ENCODE measurements at regions of chr12 and their contacts with region 1.

Region 1: DNA sequence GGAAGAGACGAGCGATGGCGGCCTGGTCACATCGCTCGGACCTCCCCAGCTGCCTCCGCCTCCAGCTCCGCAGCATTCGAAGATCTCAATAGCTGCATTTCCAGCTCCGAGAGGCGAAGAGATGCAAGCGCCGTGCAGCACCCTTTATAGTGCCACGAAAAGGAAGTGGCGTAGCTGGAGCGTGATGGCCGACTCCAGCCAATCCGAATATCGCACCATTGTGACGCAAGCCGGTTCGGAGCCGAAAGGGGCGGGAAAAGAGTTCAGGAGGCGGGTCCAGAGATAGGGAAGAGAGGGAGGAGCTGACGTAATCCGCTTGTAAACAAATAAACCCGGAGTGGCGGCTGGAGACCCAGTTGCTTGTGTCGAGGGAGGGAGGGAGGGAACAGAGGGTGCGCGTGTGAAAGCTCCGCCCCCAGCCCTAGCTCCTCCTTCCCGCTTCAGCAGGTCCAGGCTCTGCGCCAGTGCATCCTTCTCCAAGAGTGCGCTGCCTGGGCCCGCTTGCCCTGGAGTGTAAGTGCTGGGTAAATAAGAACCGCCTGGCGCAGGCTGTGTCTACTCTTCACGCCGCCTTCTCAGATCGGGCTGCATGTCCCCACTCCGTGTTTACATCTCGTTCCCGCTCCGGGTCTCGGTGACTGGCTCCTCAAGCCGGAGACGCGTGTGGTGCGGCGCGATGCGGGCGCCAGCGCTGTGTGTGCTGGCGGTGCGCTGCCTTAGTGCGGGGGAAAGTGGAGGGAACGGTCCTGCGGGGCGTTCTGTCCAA is at the start of gene BTG1:
- DNase-seq: peak; percentile 96 to 100 (median 98)
- ATAC-seq: peak; percentile 72
- H3K4me3 ChIP-seq: peak within 1 kb of the TSS; percentile 91 to 95
- H3K4me3 Mint-ChIP-seq: peak within 1 kb of the TSS; percentile 96
- H3K27ac ChIP-seq: peak within 1 kb of the TSS; percentile 90 to 92
- H3K27ac Mint-ChIP-seq: peak within 1 kb of the TSS; percentile 99
- H3K4me1 ChIP-seq: peaks cover 23% of the 10 kb centered on the region
- H3K4me1 Mint-ChIP-seq: peaks cover 27% of the 10 kb centered on the region
- H3K27me3 ChIP-seq: no peaks in the 10 kb centered on the region
- H3K27me3 Mint-ChIP-seq: no peaks in the 10 kb centered on the region
- CTCF ChIP-seq: no peak
- total RNA-seq, gene BTG1: 1,847 to 1,850 TPM

Region 2: DNA sequence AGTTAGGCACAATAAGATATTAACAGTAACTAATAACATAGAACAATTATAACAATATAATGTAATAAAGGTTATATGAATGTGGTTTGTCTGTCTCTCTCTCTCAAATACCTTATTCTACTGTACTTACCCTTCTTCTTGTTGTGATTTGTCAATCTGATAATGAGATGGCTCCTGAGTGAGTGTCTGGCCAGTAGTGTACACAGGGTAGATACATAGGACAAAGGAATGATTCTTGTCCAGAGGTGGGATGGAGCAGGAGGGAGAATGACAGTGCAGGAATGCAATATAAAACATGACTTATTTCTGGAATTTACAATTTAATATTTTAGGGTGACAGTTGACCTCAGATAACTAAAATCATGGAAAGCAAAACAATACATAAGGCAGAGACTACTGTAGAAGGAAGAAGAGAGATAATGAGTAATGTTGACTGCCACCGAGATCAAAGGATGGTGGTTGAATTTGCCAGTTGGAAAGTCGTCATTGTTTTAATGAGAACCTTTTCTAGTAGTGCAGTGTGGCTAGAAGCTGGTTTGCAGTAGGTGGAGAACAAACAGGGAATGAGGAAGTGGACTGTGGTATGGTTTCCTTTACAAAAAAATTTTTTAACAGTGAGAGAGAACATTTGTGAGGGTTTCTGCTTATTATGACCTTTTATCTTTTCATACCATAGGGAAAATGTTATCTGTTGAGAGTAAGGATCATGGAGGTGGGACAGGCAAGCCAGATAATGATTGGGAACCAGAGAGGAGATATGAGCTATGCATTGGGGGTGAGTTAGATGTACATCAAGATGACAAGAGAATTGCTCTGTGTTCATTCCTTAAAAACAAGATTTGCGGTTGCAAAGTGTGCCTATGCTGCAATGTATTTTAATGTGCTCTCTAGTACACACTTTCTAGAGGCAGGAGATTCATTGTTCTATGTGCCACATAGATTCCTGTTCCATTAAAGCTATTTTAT is 458.6 kb before region 1 on chr12:
- CTCF ChIA-PET with region 1: no interaction called
- POLR2A ChIA-PET with region 1: no interaction called
- intact Hi-C with region 1: loop called in 1 of 2 experiments (anchors 10 kb)
- DNase-seq: peak in 4 of 9 experiments; percentile 27 to 80 (median 64)
- ATAC-seq: peak; percentile 89
- H3K4me3 ChIP-seq: no peak overlapping the region
- H3K4me3 Mint-ChIP-seq: peak overlapping the region; percentile 13
- H3K27ac ChIP-seq: no peak overlapping the region
- H3K27ac Mint-ChIP-seq: peak overlapping the region; percentile 60
- H3K4me1 ChIP-seq: peaks cover 23% of the 10 kb centered on the region
- H3K4me1 Mint-ChIP-seq: peaks cover 20% of the 10 kb centered on the region
- H3K27me3 ChIP-seq: no peaks in the 10 kb centered on the region
- H3K27me3 Mint-ChIP-seq: no peaks in the 10 kb centered on the region
- CTCF ChIP-seq: no peak

Region 3: DNA sequence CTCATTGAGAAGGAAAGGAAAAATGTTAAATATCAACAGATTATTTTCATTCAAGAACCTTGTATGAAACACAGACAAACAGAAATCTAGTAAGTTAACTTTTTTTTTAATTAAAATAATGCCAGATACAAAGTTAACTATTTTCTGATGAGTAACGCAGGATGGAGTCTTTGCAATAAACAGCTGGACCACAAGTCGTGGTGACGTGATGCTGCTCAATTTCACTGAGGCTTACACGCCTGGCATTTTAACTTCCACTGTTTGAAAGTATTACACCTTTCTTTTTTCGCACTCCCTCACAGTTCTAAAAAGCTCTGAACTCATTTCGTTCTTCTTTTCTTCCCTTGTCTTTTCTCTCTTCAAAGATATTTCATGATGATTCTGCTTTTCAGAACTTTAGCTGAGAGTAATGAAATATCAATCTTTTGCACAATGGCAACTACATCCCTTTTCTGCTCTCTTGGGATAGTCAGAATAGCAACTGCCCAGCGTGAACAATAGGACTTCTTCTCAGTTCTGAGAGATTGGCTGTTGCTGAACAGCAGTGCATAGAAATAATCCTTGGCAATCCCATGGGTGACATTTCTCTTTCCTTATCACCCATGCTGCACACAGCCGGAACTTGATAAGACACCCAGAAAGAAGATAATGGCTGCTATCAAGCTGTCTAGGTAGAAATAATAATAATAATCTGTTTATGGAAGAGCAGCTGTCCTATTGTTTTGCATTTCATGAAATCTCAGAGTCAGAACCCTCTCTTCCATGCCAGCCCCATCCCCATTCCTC is 160.7 kb before region 1 on chr12:
- CTCF ChIA-PET with region 1: interaction called, 3 read pairs
- POLR2A ChIA-PET with region 1: interaction called, 41 read pairs
- intact Hi-C with region 1: no loop called
- DNase-seq: peak in 4 of 9 experiments; percentile 20 to 48 (median 27)
- ATAC-seq: peak; percentile 62
- H3K4me3 ChIP-seq: no peak overlapping the region
- H3K4me3 Mint-ChIP-seq: peak overlapping the region; percentile 32
- H3K27ac ChIP-seq: no peak overlapping the region
- H3K27ac Mint-ChIP-seq: peak overlapping the region; percentile 78
- H3K4me1 ChIP-seq: peaks cover 20% of the 10 kb centered on the region
- H3K4me1 Mint-ChIP-seq: peaks cover 59% of the 10 kb centered on the region
- H3K27me3 ChIP-seq: no peaks in the 10 kb centered on the region
- H3K27me3 Mint-ChIP-seq: no peaks in the 10 kb centered on the region
- CTCF ChIP-seq: no peak

Region 4: GRCh38 chr12:92108651-92109050 is 37.3 kb before region 1 on chr12:
- CTCF ChIA-PET with region 1: no interaction called
- POLR2A ChIA-PET with region 1: interaction called, 14 read pairs
- intact Hi-C with region 1: no loop called
- DNase-seq: no peak
- ATAC-seq: no peak
- H3K4me3 ChIP-seq: no peak overlapping the region
- H3K4me3 Mint-ChIP-seq: peak overlapping the region; percentile 44
- H3K27ac ChIP-seq: no peak overlapping the region
- H3K27ac Mint-ChIP-seq: peak overlapping the region; percentile 89
- H3K4me1 ChIP-seq: peaks cover 85% of the 10 kb centered on the region
- H3K4me1 Mint-ChIP-seq: peaks cover 82% of the 10 kb centered on the region
- H3K27me3 ChIP-seq: no peaks in the 10 kb centered on the region
- H3K27me3 Mint-ChIP-seq: no peaks in the 10 kb centered on the region
- CTCF ChIP-seq: no peak

Region 5: GRCh38 chr12:92297932-92298696 is 152.2 kb after region 1 on chr12:
- CTCF ChIA-PET with region 1: interaction called, 3 read pairs
- POLR2A ChIA-PET with region 1: interaction called, 3 read pairs
- intact Hi-C with region 1: loop called in 1 of 2 experiments (anchors 2 kb)
- DNase-seq: peak in 4 of 9 experiments; percentile 5 to 55 (median 30)
- ATAC-seq: peak; percentile 88
- H3K4me3 ChIP-seq: no peak overlapping the region
- H3K4me3 Mint-ChIP-seq: peak overlapping the region; percentile 29
- H3K27ac ChIP-seq: peak overlapping the region; percentile 8 to 13
- H3K27ac Mint-ChIP-seq: peak overlapping the region; percentile 84
- H3K4me1 ChIP-seq: peaks cover 31% of the 10 kb centered on the region
- H3K4me1 Mint-ChIP-seq: peaks cover 15% of the 10 kb centered on the region
- H3K27me3 ChIP-seq: no peaks in the 10 kb centered on the region
- H3K27me3 Mint-ChIP-seq: no peaks in the 10 kb centered on the region
- CTCF ChIP-seq: no peak

Region 6: GRCh38 chr12:92505254-92506231 is 359.6 kb after region 1 on chr12:
- CTCF ChIA-PET with region 1: no interaction called
- POLR2A ChIA-PET with region 1: interaction called, 18 read pairs
- intact Hi-C with region 1: no loop called
- DNase-seq: peak in 8 of 9 experiments; percentile 11 to 67 (median 40)
- ATAC-seq: peak; percentile 80
- H3K4me3 ChIP-seq: peak overlapping the region; percentile 27 to 28
- H3K4me3 Mint-ChIP-seq: peak overlapping the region; percentile 80
- H3K27ac ChIP-seq: peak overlapping the region; percentile 48 to 75
- H3K27ac Mint-ChIP-seq: peak overlapping the region; percentile 96
- H3K4me1 ChIP-seq: peaks cover 9% of the 10 kb centered on the region
- H3K4me1 Mint-ChIP-seq: peaks cover 22% of the 10 kb centered on the region
- H3K27me3 ChIP-seq: no peaks in the 10 kb centered on the region
- H3K27me3 Mint-ChIP-seq: no peaks in the 10 kb centered on the region
- CTCF ChIP-seq: no peak

Region 7: GRCh38 chr12:92649511-92650227 is 503.8 kb after region 1 on chr12:
- CTCF ChIA-PET with region 1: interaction called, 6 read pairs
- POLR2A ChIA-PET with region 1: no interaction called
- intact Hi-C with region 1: loop called (anchors 1 to 5 kb)
- DNase-seq: peak; percentile 29 to 85 (median 63)
- ATAC-seq: peak; percentile 90
- H3K4me3 ChIP-seq: no peak overlapping the region
- H3K4me3 Mint-ChIP-seq: no peak overlapping the region
- H3K27ac ChIP-seq: no peak overlapping the region
- H3K27ac Mint-ChIP-seq: no peak overlapping the region
- H3K4me1 ChIP-seq: no peaks in the 10 kb centered on the region
- H3K4me1 Mint-ChIP-seq: peaks cover 6% of the 10 kb centered on the region
- H3K27me3 ChIP-seq: no peaks in the 10 kb centered on the region
- H3K27me3 Mint-ChIP-seq: no peaks in the 10 kb centered on the region
- CTCF ChIP-seq: peak; percentile 68

Region 8: GRCh38 chr12:93645702-93646101 is 1499.8 kb after region 1 on chr12:
- CTCF ChIA-PET with region 1: no interaction called
- POLR2A ChIA-PET with region 1: no interaction called
- intact Hi-C with region 1: no loop called
- DNase-seq: no peak
- ATAC-seq: no peak
- H3K4me3 ChIP-seq: no peak overlapping the region
- H3K4me3 Mint-ChIP-seq: no peak overlapping the region
- H3K27ac ChIP-seq: no peak overlapping the region
- H3K27ac Mint-ChIP-seq: no peak overlapping the region
- H3K4me1 ChIP-seq: no peaks in the 10 kb centered on the region
- H3K4me1 Mint-ChIP-seq: no peaks in the 10 kb centered on the region
- H3K27me3 ChIP-seq: no peaks in the 10 kb centered on the region
- H3K27me3 Mint-ChIP-seq: peaks cover 2% of the 10 kb centered on the region
- CTCF ChIP-seq: no peak